ENCODE measurements at regions of chr6 and their contacts with region 1.

Region 1: DNA sequence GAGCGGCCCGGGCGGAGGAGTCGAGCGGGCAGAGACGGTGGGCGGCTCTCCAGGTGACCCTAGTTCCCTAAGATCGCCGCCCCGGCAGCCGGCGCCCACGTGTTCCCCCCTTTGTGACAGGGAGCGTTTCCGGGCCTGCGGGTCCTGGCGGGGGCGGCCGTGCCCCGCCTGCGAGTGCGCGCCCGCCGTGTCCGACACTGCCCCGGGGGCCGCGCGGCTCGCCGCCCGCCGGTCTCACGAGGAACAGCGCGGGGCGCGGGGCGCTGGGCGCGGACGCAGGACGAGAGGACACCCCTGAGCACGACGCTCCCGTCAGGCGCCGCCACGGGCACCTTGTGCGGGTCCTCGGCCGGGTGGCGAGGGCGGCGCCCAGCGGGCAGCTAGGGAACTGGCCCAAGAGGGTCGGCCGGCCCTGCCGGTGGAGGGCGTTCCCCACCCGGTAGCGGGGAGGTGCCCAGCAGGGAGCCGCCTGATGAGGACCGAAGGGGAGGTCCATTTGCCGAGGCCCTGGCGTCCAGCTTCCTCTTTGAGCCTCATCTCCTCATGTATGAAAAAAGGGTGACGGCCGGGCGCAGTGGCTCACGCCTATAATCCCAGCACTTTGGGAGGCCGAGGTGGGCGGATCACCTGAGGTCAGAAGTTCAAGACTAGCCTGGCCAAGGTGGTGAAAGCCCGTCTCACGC is at the start of gene VARS1:
- DNase-seq: peak; percentile 62
- ATAC-seq: peak; percentile 88
- H3K4me3 ChIP-seq: peak within 1 kb of the TSS; percentile 81
- H3K27ac ChIP-seq: peak within 1 kb of the TSS; percentile 95
- H3K4me1 ChIP-seq: peaks cover 4% of the 10 kb centered on the region
- H3K27me3 ChIP-seq: no peaks in the 10 kb centered on the region
- CTCF ChIP-seq: peak; percentile 84 to 98 (median 88); a peak in 5 of 6 replicates
- EP300 ChIP-seq: no peak
- POLR2A ChIP-seq: peak; percentile 76
- RAD21 ChIP-seq: peak; percentile 53
- polyA plus RNA-seq, gene VARS1: 1.2 to 5.7 TPM

Region 2: GRCh38 chr6:31776989-31777666 is 18.6 kb before region 1 on chr6 and contains the start of gene VWA7:
- CTCF ChIA-PET with region 1: interaction called, 12 read pairs
- POLR2A ChIA-PET with region 1: interaction called, 7 read pairs
- RAD21 ChIA-PET with region 1: interaction called, 5 read pairs
- SMC1A ChIA-PET with region 1: interaction called, 4 read pairs
- in situ Hi-C with region 1: no loop called
- intact Hi-C with region 1: no loop called
- DNase-seq: peak; percentile 70
- ATAC-seq: peak; percentile 95
- H3K4me3 ChIP-seq: no peak within 1 kb of the TSS
- H3K27ac ChIP-seq: peak within 1 kb of the TSS; percentile 37; the same call in 1 of the 2 replicates
- H3K4me1 ChIP-seq: peaks cover 18% of the 10 kb centered on the region
- H3K27me3 ChIP-seq: no peaks in the 10 kb centered on the region
- CTCF ChIP-seq: no peak
- EP300 ChIP-seq: peak; percentile 33 to 39; a peak in 2 of 4 replicates
- POLR2A ChIP-seq: peak; percentile 72
- RAD21 ChIP-seq: no peak
- polyA plus RNA-seq, gene VWA7: 0.11 TPM in 1 of 2 experiments, not detected in the other

Region 3: DNA sequence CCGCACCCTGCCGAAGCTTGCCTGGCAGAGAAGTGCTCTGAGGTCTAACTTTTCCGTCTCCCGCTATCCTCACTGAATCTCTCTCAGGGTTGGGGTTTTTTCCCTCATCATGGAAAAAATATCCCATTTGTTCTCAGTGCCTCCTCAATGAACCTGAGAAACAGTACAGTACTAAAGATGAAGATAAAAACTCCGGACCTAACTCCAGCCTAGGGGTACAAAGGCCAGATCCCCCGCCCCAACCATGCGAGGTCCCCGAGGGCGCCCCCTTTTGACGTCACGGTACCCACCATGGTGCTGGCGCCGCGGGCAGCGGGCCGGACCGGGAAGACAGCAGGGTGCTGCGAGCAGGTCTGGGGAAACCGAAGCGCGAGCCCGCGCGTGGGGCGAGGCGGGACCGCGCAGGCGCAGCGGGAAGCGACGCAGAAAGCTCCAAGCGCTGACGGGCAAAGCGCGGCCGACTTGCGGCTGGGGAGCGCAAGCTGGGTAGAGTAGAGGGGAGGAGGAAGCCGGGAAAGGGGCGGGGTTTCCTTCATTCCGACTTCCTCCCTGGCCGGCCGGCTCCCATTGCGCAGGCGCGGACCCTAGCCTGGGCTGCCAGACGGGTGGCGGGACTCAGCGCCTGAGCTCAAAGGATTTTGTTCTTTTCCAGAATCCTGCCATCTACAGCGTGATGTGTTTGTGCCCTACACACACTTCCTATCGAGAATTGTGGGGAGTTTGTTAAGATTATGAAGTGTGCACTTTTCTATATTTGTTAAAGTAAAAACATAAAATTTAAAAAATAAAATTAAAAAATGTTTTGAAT is 10.9 kb after region 1 on chr6 and contains the start of gene LSM2:
- CTCF ChIA-PET with region 1: interaction called, 26 read pairs
- POLR2A ChIA-PET with region 1: interaction called, 14 read pairs
- RAD21 ChIA-PET with region 1: interaction called, 11 read pairs
- SMC1A ChIA-PET with region 1: interaction called, 10 read pairs
- in situ Hi-C with region 1: no loop called
- intact Hi-C with region 1: no loop called
- DNase-seq: peak; percentile 74
- ATAC-seq: peak; percentile 98
- H3K4me3 ChIP-seq: peak within 1 kb of the TSS; percentile 92
- H3K27ac ChIP-seq: peak within 1 kb of the TSS; percentile 81
- H3K4me1 ChIP-seq: peaks cover 5% of the 10 kb centered on the region
- H3K27me3 ChIP-seq: no peaks in the 10 kb centered on the region
- CTCF ChIP-seq: peak; percentile 24 to 34 (median 24); a peak in 3 of 6 replicates
- EP300 ChIP-seq: no peak
- POLR2A ChIP-seq: peak; percentile 92
- RAD21 ChIP-seq: no peak
- polyA plus RNA-seq, gene LSM2: 245 to 248 TPM

Region 4: DNA sequence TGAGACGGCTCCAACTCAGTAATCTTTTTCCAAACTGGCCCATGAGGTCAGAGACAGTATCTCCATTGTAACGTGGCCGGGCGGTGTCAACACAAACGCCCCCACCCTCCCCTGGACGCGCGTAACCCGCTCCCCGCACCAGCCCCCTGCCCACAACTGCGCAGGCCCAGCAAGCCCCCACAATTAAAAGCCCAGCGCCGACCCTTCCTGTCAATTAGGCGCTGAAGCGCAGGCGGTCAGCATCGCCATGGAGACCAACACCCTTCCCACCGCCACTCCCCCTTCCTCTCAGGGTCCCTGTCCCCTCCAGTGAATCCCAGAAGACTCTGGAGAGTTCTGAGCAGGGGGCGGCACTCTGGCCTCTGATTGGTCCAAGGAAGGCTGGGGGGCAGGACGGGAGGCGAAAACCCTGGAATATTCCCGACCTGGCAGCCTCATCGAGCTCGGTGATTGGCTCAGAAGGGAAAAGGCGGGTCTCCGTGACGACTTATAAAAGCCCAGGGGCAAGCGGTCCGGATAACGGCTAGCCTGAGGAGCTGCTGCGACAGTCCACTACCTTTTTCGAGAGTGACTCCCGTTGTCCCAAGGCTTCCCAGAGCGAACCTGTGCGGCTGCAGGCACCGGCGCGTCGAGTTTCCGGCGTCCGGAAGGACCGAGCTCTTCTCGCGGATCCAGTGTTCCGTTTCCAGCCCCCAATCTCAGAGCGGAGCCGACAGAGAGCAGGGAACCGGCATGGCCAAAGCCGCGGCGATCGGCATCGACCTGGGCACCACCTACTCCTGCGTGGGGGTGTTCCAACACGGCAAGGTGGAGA is 19.5 kb after region 1 on chr6 and contains the starts of genes HSPA1A and HSPA1L:
- CTCF ChIA-PET with region 1: interaction called, 12 read pairs
- POLR2A ChIA-PET with region 1: interaction called, 10 read pairs
- RAD21 ChIA-PET with region 1: interaction called, 19 read pairs
- SMC1A ChIA-PET with region 1: interaction called, 10 read pairs
- in situ Hi-C with region 1: no loop called
- intact Hi-C with region 1: loop called (anchors 2 kb)
- DNase-seq: no peak
- ATAC-seq: peak; percentile 58
- H3K4me3 ChIP-seq: peak within 1 kb of the TSS; percentile 94
- H3K27ac ChIP-seq: peak within 1 kb of the TSS; percentile 58
- H3K4me1 ChIP-seq: peaks cover 29% of the 10 kb centered on the region
- H3K27me3 ChIP-seq: no peaks in the 10 kb centered on the region
- CTCF ChIP-seq: no peak
- EP300 ChIP-seq: 0 out of 4 replicates have a peak, but pooled peaks of 1 of the 2 experiments have one; percentile 30
- POLR2A ChIP-seq: peak; percentile 81
- RAD21 ChIP-seq: no peak
- polyA plus RNA-seq, gene HSPA1A: 0.29 to 1.3 TPM
- polyA plus RNA-seq, gene HSPA1L: 0.69 TPM